Mammary epithelial cell (primary cell): ENCODE measurements at regions of chr4 and their contacts with region 1.

Region 1: GRCh38 chr4:40924096-40924792 is 174.5 kb downstream of the NSUN7 start:
- DNase-seq: no peak
- H3K4me3 ChIP-seq: no peak overlapping the region
- H3K27ac ChIP-seq: no peak overlapping the region
- H3K4me1 ChIP-seq: no peaks in the 10 kb centered on the region
- H3K27me3 ChIP-seq: no peaks in the 10 kb centered on the region
- CTCF ChIP-seq: peak; percentile 86 to 90

Region 2: GRCh38 chr4:40908702-40909362 is 15.4 kb before region 1 on chr4:
- CTCF ChIA-PET with region 1: no interaction called
- dilution Hi-C with region 1: no loop called
- in situ Hi-C with region 1: no loop called
- intact Hi-C with region 1: loop called (anchors 1 kb)
- DNase-seq: peak; percentile 57
- H3K4me3 ChIP-seq: no peak overlapping the region
- H3K27ac ChIP-seq: peak overlapping the region; percentile 37
- H3K4me1 ChIP-seq: peaks cover 27% of the 10 kb centered on the region
- H3K27me3 ChIP-seq: no peaks in the 10 kb centered on the region
- CTCF ChIP-seq: peak; percentile 89 to 90

Region 3: DNA sequence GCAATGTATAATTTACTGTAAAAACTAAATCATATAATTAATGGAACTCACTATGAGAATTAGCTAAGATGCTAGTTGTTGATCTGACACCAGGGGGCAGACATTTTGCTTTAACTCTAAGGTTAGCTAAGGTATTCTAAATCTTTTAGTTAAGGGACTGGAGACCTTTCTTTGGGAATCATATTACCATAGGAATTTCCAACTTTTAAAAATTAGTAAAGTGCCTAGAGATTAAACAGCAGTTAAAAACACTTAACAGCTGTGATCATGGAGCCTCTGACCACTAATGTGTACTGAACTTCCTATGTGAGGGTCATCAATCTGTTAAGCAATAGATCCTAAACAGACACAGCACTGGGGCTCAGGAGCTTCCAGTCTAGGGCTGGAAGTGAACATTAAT is 52.1 kb after region 1 on chr4:
- CTCF ChIA-PET with region 1: no interaction called
- dilution Hi-C with region 1: no loop called
- in situ Hi-C with region 1: no loop called
- intact Hi-C with region 1: loop called (anchors 5 kb)
- DNase-seq: peak; percentile 42
- H3K4me3 ChIP-seq: no peak overlapping the region
- H3K27ac ChIP-seq: no peak overlapping the region
- H3K4me1 ChIP-seq: no peaks in the 10 kb centered on the region
- H3K27me3 ChIP-seq: no peaks in the 10 kb centered on the region
- CTCF ChIP-seq: peak; percentile 60 to 75